Activated B cell treated with CpG ODN at 0.5 μM for 24 hours (primary cell): ENCODE measurements at regions of chr4 and their contacts with region 1.

Region 1: GRCh38 chr4:53196882-53197771 is 168.7 kb downstream of the SCFD2 start:
- DNase-seq: no peak
- ATAC-seq: no peak
- H3K4me3 Mint-ChIP-seq: no peak overlapping the region
- H3K27ac Mint-ChIP-seq: no peak overlapping the region
- H3K4me1 Mint-ChIP-seq: peaks cover under 1% of the 10 kb centered on the region
- H3K27me3 Mint-ChIP-seq: no peaks in the 10 kb centered on the region
- CTCF ChIP-seq: no peak

Region 2: GRCh38 chr4:52545099-52546069 is 651.7 kb before region 1 on chr4:
- CTCF ChIA-PET with region 1: no interaction called
- POLR2A ChIA-PET with region 1: no interaction called
- intact Hi-C with region 1: loop called (anchors 10 kb)
- DNase-seq: peak; percentile 47
- ATAC-seq: peak; percentile 65
- H3K4me3 Mint-ChIP-seq: no peak overlapping the region
- H3K27ac Mint-ChIP-seq: no peak overlapping the region
- H3K4me1 Mint-ChIP-seq: no peaks in the 10 kb centered on the region
- H3K27me3 Mint-ChIP-seq: peaks cover 5% of the 10 kb centered on the region
- CTCF ChIP-seq: no peak

Region 3: GRCh38 chr4:53601251-53601764 is 404.2 kb after region 1 on chr4:
- CTCF ChIA-PET with region 1: no interaction called
- POLR2A ChIA-PET with region 1: no interaction called
- intact Hi-C with region 1: loop called (anchors 1 kb)
- DNase-seq: no peak
- ATAC-seq: peak; percentile 61
- H3K4me3 Mint-ChIP-seq: no peak overlapping the region
- H3K27ac Mint-ChIP-seq: no peak overlapping the region
- H3K4me1 Mint-ChIP-seq: peaks cover 6% of the 10 kb centered on the region
- H3K27me3 Mint-ChIP-seq: peaks cover 13% of the 10 kb centered on the region
- CTCF ChIP-seq: no peak

Region 4: GRCh38 chr4:53804719-53805118 is 607.6 kb after region 1 on chr4:
- CTCF ChIA-PET with region 1: interaction called, 7 read pairs
- POLR2A ChIA-PET with region 1: no interaction called
- intact Hi-C with region 1: loop called (anchors 1 kb)
- DNase-seq: peak; percentile 23
- ATAC-seq: no peak
- H3K4me3 Mint-ChIP-seq: no peak overlapping the region
- H3K27ac Mint-ChIP-seq: no peak overlapping the region
- H3K4me1 Mint-ChIP-seq: no peaks in the 10 kb centered on the region
- H3K27me3 Mint-ChIP-seq: peaks cover 2% of the 10 kb centered on the region
- CTCF ChIP-seq: no peak

Region 5: DNA sequence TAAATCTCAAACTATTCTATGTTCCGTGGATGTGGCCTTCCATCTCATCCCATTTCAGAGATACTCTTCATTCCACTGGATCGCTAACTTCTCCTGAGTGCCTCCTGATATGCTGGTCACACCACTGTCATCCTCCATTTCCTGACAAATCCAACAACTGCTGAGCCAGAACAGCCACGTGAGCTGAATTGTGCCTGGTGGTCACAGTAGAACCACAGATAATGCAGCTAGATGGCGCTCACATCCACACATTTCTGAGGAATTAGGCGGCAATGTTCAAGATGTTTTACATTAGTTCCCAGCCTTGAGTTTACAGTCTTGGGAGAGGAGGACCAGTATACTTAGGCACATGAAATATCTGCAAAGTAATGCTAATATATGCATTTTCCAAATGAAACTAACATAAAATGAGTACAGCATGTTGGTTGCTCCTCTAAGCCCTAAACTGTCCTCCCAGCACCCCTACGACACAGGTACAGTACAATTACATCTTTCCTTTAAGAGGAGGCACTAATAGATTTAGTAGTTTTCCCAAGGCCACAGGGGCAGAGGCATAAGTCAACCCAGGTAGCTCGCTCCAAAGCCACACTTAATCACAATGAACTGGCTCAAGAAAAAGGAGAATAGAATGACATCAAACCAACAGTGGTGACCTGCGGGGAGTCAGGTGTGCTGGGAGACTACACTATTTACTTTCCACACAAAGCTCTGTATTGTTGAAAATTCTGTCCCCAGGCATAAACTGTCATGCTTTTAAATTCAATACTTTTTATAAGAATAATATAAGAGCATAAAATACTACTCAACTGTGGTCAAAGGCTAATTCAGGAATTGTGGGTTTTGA is 733.0 kb after region 1 on chr4:
- CTCF ChIA-PET with region 1: no interaction called
- POLR2A ChIA-PET with region 1: no interaction called
- intact Hi-C with region 1: loop called (anchors 1 kb)
- DNase-seq: no peak
- ATAC-seq: no peak
- H3K4me3 Mint-ChIP-seq: no peak overlapping the region
- H3K27ac Mint-ChIP-seq: no peak overlapping the region
- H3K4me1 Mint-ChIP-seq: no peaks in the 10 kb centered on the region
- H3K27me3 Mint-ChIP-seq: peaks cover 9% of the 10 kb centered on the region
- CTCF ChIP-seq: no peak